ENCODE measurements at regions of chr4 and their contacts with region 1.

Region 1: GRCh38 chr4:151099229-151099975 is at the start of gene RPS3A:
- DNase-seq: peak; percentile 98
- H3K4me3 Mint-ChIP-seq: peak within 1 kb of the TSS; percentile 97
- H3K27ac Mint-ChIP-seq: peak within 1 kb of the TSS; percentile 98
- H3K4me1 Mint-ChIP-seq: peaks cover 56% of the 10 kb centered on the region
- H3K27me3 Mint-ChIP-seq: peaks cover 3% of the 10 kb centered on the region
- total RNA-seq, gene RPS3A: 1,686 and 1,760 TPM in 2 replicates

Region 2: GRCh38 chr4:150297861-150298474 is 801.4 kb before region 1 on chr4:
- intact Hi-C with region 1: loop called (anchors 1 kb)
- DNase-seq: no peak
- H3K4me3 Mint-ChIP-seq: no peak overlapping the region
- H3K27ac Mint-ChIP-seq: no peak overlapping the region
- H3K4me1 Mint-ChIP-seq: peaks cover 18% of the 10 kb centered on the region
- H3K27me3 Mint-ChIP-seq: no peaks in the 10 kb centered on the region

Region 3: GRCh38 chr4:150436598-150437370 is 662.6 kb before region 1 on chr4:
- intact Hi-C with region 1: loop called (anchors 5 kb)
- DNase-seq: no peak
- H3K4me3 Mint-ChIP-seq: no peak overlapping the region
- H3K27ac Mint-ChIP-seq: peak overlapping the region; percentile 1
- H3K4me1 Mint-ChIP-seq: peaks cover 13% of the 10 kb centered on the region
- H3K27me3 Mint-ChIP-seq: no peaks in the 10 kb centered on the region

Region 4: GRCh38 chr4:150746156-150746555 is 353.2 kb before region 1 on chr4:
- intact Hi-C with region 1: no loop called
- DNase-seq: no peak
- H3K4me3 Mint-ChIP-seq: no peak overlapping the region
- H3K27ac Mint-ChIP-seq: no peak overlapping the region
- H3K4me1 Mint-ChIP-seq: no peaks in the 10 kb centered on the region
- H3K27me3 Mint-ChIP-seq: no peaks in the 10 kb centered on the region

Region 5: GRCh38 chr4:150970685-150971151 is 128.7 kb before region 1 on chr4:
- intact Hi-C with region 1: loop called (anchors 1 kb)
- DNase-seq: no peak
- H3K4me3 Mint-ChIP-seq: no peak overlapping the region
- H3K27ac Mint-ChIP-seq: peak overlapping the region; percentile 1
- H3K4me1 Mint-ChIP-seq: peaks cover 45% of the 10 kb centered on the region
- H3K27me3 Mint-ChIP-seq: no peaks in the 10 kb centered on the region

Region 6: GRCh38 chr4:151031831-151032605 is 67.4 kb before region 1 on chr4:
- intact Hi-C with region 1: loop called (anchors 1 kb)
- DNase-seq: no peak
- H3K4me3 Mint-ChIP-seq: peak overlapping the region; percentile 73
- H3K27ac Mint-ChIP-seq: peak overlapping the region; percentile 88
- H3K4me1 Mint-ChIP-seq: peaks cover 37% of the 10 kb centered on the region
- H3K27me3 Mint-ChIP-seq: no peaks in the 10 kb centered on the region

Region 7: DNA sequence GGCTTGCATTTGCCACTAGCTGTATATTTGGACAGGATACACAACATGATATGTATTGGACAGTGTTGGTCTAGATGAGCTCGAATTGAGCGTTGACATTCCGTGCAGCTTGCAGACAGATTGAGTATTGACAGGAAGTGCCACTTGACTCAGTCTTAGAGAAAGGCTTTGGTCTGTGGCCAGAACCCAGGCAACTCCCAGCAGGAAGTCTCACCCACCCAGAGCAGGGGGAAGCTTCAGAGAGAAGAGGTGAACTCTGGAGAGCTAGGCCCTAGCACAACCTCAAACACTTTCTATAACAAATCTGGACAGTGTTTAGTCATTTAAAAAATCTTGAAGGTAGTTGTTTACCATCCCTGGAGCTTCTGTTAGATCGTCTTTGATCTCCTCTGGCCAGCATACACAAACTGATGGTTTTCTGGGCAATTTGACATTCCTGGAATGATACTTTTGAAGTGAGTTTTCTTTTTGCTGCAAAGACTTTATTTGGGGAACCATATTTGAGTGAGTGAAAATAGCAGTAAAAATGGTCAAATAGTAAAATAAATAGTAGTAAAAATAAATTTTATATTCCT is 1156.1 kb after region 1 on chr4:
- intact Hi-C with region 1: loop called (anchors 5 kb)
- DNase-seq: peak; percentile 70
- H3K4me3 Mint-ChIP-seq: no peak overlapping the region
- H3K27ac Mint-ChIP-seq: no peak overlapping the region
- H3K4me1 Mint-ChIP-seq: no peaks in the 10 kb centered on the region
- H3K27me3 Mint-ChIP-seq: no peaks in the 10 kb centered on the region

Region 8: GRCh38 chr4:152779513-152780266 is 1680.3 kb after region 1 on chr4 and contains the starts of genes ARFIP1 and TIGD4:
- intact Hi-C with region 1: loop called (anchors 1 kb)
- DNase-seq: peak; percentile 96
- H3K4me3 Mint-ChIP-seq: peak within 1 kb of the TSS; percentile 99
- H3K27ac Mint-ChIP-seq: peak within 1 kb of the TSS; percentile 94
- H3K4me1 Mint-ChIP-seq: peaks cover 44% of the 10 kb centered on the region
- H3K27me3 Mint-ChIP-seq: peaks cover 25% of the 10 kb centered on the region
- total RNA-seq, gene ARFIP1: 18.6 and 23.2 TPM in 2 replicates
- total RNA-seq, gene TIGD4: 0.24 and 0.57 TPM in 2 replicates

Measured in activated T-helper 1 cell treated with anti-CD3 and anti-CD28 coated beads, Interleukin-12 subunit alpha, Interleukin-12 subunit beta, Interleukin-2, Interleukin-4 antibody, amounts not matched to agents 30 ng/mL and 10 ng/mL and 1 ng/mL, durations not matched to agents 14 hours and 24 hours and 36 hours (primary cell).